OCI-LY7 (cell line): ENCODE measurements at regions of chr11 and their contacts with region 1.

Region 1: DNA sequence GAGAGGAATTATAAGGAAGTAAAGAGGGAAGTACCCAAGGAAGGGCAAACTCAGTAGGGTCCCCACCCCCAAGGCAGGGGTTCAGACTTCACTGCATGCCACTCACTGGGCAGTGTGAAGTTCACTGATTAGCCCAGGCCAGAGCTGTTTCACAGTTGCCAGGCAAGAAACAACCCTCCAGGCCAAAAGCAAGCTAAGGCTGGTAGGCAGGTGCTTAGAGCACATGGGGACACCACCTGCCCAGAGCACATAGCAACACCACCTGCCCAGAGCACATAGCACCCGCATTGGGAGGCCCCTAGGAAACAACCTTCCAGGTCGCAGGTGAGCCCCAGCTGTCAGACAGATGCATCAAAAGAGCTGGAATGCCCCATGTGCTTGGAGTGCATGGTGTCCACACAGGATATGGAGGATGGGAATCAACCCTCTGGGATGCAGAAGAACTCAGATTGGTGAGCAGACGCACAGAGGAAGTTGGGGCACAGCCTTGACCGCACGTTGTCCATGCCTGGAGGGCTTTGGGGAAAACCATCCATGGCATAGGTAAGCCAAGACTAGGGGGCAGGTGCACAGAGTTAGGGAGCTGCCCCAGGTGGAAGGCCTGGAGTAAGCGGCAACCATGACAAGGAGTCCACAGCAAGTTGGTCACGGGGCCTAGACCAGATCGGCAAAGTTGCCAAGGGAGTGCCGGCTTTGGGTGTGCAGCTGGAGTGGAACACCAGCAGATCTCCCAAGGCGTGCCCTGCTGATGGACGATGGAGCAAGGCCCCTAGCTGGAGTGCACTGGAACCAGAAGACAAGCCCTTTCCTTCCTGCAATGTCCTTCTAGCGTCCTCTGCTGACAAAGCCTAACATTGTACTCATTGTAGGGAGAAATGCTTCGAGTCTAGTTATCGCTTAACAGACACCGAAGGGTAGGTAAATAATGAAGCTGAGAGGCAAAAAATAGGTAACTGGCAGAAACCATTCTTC is 7.8 kb upstream of the TMEM216 start:
- DNase-seq: peak; percentile 18
- H3K4me3 ChIP-seq: no peak overlapping the region
- H3K27ac ChIP-seq: no peak overlapping the region
- H3K4me1 ChIP-seq: no peaks in the 10 kb centered on the region
- CTCF ChIP-seq: no peak; the same call in 1 of the 2 replicates

Region 2: GRCh38 chr11:60563553-60564235 is 820.9 kb before region 1 on chr11:
- CTCF ChIA-PET with region 1: no interaction called
- POLR2A ChIA-PET with region 1: no interaction called
- intact Hi-C with region 1: no loop called
- DNase-seq: peak; percentile 13
- H3K4me3 ChIP-seq: no peak overlapping the region
- H3K27ac ChIP-seq: no peak overlapping the region
- H3K4me1 ChIP-seq: no peaks in the 10 kb centered on the region
- CTCF ChIP-seq: 0 out of 2 replicates have a peak, but pooled peaks have one; percentile 22

Region 3: GRCh38 chr11:61254403-61255025 is 130.0 kb before region 1 on chr11:
- CTCF ChIA-PET with region 1: no interaction called
- POLR2A ChIA-PET with region 1: no interaction called
- intact Hi-C with region 1: loop called (anchors 1 kb)
- DNase-seq: peak; percentile 69
- H3K4me3 ChIP-seq: no peak overlapping the region
- H3K27ac ChIP-seq: no peak overlapping the region
- H3K4me1 ChIP-seq: no peaks in the 10 kb centered on the region
- CTCF ChIP-seq: peak; percentile 85

Region 4: DNA sequence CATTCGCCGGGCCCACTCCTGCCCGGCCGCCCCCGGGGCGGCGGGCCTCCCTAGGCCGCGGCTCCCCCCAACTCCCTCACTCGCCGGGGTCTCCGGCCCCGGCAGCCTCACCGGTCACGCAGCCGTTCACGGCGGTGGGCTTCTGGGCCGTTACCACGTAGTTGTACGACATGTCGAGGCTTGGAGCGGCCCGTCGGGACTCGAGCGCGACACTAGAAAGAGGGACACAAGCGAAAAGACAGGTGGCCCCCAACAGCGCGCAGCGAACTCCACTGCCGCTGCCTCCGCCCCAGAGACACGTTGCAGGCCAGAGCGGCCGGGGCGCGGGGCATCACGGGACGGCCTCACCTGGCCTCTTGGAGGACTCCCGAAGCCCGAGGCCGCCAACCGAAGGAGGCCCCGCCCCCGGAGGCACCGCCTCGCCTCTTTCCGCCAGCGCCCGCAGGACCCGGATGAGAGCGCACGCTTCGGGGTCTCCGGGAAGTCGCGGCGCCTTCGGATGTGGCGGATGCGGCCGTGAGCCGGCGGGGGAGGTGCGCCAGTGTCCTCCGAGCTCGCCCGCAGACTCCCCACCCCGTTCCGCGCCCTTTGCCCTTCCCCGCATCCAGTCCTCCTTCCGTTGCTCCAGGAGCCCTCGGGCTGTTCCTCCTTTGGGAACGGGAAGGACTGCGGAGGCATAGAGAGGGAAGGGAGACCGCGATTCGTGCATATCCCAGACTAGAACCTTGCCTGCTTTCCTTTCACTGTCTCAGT is 51.6 kb before region 1 on chr11 and contains the starts of genes DDB1 and TKFC:
- CTCF ChIA-PET with region 1: interaction called, 48 read pairs
- POLR2A ChIA-PET with region 1: interaction called, 41 read pairs
- intact Hi-C with region 1: loop called (anchors 1 kb)
- DNase-seq: peak; percentile 96
- H3K4me3 ChIP-seq: peak within 1 kb of the TSS; percentile 98
- H3K27ac ChIP-seq: peak within 1 kb of the TSS; percentile 79
- H3K4me1 ChIP-seq: peaks cover 44% of the 10 kb centered on the region
- CTCF ChIP-seq: no peak
- total RNA-seq, gene DDB1: 194 and 218 TPM in 2 replicates
- total RNA-seq, gene TKFC: 75.3 and 77.8 TPM in 2 replicates

Region 5: GRCh38 chr11:61495801-61496597 is 111.4 kb after region 1 on chr11:
- CTCF ChIA-PET with region 1: no interaction called
- POLR2A ChIA-PET with region 1: no interaction called
- intact Hi-C with region 1: no loop called
- DNase-seq: no peak
- H3K4me3 ChIP-seq: no peak overlapping the region
- H3K27ac ChIP-seq: no peak overlapping the region
- H3K4me1 ChIP-seq: no peaks in the 10 kb centered on the region
- CTCF ChIP-seq: no peak